Right lobe of liver (tissue), 6 donors: ENCODE measurements at regions of chr16 and their contacts with region 1.

Region 1: DNA sequence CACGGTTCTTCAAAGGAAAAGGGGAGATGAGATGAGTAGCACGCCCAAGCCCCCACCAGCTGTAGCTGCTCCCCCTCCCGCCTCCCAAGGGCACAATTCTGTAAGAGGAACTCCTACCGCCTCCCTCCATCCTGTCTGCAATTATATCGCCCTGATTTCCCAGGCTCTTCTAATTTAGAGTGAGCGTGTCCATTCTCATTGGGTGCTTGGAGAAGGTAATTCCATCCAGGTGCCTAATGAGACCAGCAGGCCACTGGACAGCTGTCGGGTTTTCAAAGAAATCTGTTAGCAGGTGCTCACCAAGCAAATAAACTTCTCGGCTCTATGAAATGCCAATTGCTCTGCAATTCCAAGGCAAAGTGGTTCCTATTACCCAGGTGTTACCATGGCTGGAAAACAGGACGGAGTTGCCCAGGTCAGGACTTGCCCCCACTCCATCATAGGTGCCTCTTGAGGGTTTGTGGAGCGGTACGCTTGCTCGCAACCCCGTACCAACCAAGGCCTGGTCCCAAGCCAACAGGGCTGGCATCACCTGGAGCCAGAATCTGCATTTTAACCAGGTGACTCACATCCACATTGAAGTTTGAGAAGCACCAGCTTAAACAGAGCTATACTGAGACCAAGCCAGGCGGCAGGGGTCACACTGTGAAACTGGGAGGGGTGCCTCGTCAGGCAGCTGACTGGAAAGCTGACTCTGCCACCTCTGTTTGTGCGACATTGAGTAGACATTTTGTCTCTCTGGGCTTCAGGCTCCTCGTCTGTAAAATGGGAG is 16.5 kb upstream of the MEAK7 start:
- DNase-seq: no peak
- ATAC-seq: no peak
- H3K4me3 ChIP-seq: no peak overlapping the region
- H3K27ac ChIP-seq: no peak overlapping the region
- H3K4me1 ChIP-seq: no peaks in the 10 kb centered on the region
- H3K27me3 ChIP-seq: no peaks in the 10 kb centered on the region
- CTCF ChIP-seq: no peak
- POLR2A ChIP-seq: no peak

Region 2: DNA sequence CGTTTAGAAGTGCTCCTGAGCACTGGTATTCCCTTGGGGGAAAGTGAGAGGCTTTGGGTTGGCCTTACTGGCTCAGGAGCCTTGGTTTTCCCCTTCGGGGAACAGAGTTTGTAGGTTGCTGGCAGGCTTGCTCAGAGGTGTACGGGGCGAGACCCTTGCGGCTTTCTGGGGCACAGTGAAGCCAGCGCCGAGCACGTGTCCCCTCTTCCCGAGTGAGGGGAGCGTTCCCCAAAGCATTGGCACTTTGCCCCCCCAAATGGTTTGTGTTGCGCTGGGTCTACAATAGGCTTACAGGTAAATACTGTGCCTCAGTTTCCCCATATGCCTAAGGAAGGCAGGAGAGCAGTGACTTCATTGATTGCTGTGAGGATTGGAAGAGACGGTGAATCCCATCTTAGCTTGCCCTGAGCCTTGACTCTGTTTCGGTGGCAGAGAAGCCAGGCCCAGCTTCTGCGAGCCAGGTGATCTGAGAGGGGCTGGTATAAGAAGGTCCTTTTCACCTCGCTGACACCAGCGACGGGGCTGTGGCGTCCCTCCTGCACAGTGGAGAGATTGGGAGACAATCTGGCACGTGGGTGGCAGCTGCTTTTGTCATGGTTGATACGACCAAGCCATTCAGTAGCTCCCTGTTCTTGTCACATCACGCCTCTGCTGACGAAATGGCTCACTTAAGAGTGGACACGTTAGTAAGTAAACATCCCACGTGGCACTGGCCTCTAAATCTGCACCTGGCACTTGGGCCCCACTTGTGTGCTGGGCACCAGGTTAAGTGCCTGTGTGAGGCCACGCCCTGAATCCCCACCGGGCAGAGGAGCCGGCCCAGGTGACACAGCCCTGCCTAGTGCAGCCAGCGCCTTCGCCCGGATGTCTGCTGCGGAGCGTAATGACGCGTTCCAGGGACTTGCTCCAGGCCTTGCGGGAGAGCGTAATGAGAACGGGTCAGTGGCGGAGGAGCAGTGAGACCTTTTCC is 71.5 kb before region 1 on chr16:
- intact Hi-C with region 1: no loop called
- DNase-seq: peak in 1 of 3 donors; percentile 38
- ATAC-seq: peak in 1 of 4 donors; percentile 16
- H3K4me3 ChIP-seq: no peak overlapping the region
- H3K27ac ChIP-seq: no peak overlapping the region
- H3K4me1 ChIP-seq: no peaks in the 10 kb centered on the region
- H3K27me3 ChIP-seq: no peaks in the 10 kb centered on the region
- CTCF ChIP-seq: no peak
- POLR2A ChIP-seq: no peak

Region 3: DNA sequence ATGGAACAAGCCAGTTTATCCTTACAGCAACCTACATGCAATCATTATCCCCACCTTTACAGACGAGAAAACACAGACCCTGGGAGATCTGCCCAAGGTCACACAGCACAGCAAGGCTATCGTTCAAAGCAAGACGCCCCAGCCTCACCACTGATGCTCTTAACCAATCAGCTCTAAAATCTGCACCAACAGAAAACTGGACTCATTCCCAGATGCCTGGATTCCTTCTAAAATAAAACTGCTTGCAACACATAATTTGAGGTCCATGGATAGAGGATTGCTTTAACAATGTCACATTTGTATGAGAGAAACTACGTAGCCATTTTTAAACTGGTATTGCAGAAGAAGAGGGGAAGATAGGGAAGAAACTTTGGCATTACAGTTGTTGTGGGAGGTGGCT is 90.1 kb after region 1 on chr16:
- intact Hi-C with region 1: loop called in 1 of 2 experiments (anchors 5 kb)
- DNase-seq: no peak
- ATAC-seq: no peak
- H3K4me3 ChIP-seq: no peak overlapping the region
- H3K27ac ChIP-seq: no peak overlapping the region
- H3K4me1 ChIP-seq: no peaks in the 10 kb centered on the region
- H3K27me3 ChIP-seq: no peaks in the 10 kb centered on the region
- CTCF ChIP-seq: no peak
- POLR2A ChIP-seq: no peak